Naive thymus-derived CD4-positive, alpha-beta T cell (primary cell): ENCODE measurements at regions of chr4 and their contacts with region 1.

Region 1: DNA sequence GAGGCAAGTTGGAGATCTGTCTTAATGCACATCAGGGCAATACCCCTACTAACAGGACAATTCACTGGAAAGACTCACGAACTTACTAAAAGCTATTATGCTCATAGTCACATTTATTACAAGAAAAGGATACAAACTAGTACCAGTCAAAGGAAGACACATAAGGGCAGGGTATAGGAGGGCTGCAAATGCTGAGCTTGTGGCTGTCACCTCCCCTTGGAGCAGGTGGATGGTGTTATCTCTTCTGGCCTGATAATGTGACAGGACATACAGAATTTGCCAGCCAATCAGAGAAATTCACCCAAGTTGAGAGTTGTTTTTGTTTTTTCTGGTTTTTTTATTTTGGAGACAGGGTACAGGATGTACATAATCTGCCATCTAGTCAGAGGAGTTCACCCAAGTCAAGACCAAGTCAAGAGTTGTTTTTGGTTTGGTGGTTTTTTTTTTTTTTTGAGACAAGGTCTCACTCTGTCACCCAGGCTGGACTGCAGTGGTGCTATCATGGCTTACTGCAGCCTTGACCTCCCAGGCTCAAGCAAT is 8.8 kb downstream of the HERC5 start:
- DNase-seq: no peak
- ATAC-seq: no peak
- H3K4me3 ChIP-seq: no peak overlapping the region
- H3K4me3 Mint-ChIP-seq: peak overlapping the region in 1 of 10 donors; percentile 10
- H3K27ac ChIP-seq: no peak overlapping the region
- H3K27ac Mint-ChIP-seq: peak overlapping the region in 2 of 9 donors; percentile 0 to 79
- H3K4me1 ChIP-seq: no peaks in the 10 kb centered on the region
- H3K4me1 Mint-ChIP-seq: peaks cover 0 to 43% (median 13%) of the 10 kb centered on the region in 7 donors
- H3K27me3 ChIP-seq: no peaks in the 10 kb centered on the region
- H3K27me3 Mint-ChIP-seq: no peaks in the 10 kb centered on the region

Region 2: DNA sequence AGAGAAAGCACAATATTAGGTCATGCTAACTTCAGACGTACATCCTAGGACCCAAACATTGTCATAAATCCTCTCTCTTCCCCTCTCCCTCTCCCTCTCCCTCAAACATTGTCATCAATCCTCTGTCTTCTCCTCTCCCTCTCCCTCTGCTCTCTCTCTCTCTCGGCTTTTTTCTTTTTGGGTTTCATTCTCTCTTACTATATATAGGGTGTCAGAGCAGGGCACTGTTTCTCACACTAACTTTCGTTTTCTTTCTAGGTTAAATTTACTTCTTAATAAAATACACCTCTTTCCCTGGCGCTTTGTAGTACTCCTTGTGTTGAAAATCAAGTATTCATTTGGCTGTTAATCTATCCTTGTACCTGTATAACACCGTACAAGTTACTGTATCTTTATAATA is 45.8 kb before region 1 on chr4:
- CTCF ChIA-PET with region 1: interaction called, 3 read pairs
- POLR2A ChIA-PET with region 1: interaction called, 3 read pairs
- intact Hi-C with region 1: loop called in 1 of 2 experiments (anchors 1 kb)
- DNase-seq: no peak
- ATAC-seq: no peak
- H3K4me3 ChIP-seq: no peak overlapping the region
- H3K4me3 Mint-ChIP-seq: peak overlapping the region in 1 of 10 donors; percentile 13
- H3K27ac ChIP-seq: no peak overlapping the region
- H3K27ac Mint-ChIP-seq: peak overlapping the region in 2 of 9 donors; percentile 3 to 4
- H3K4me1 ChIP-seq: no peaks in the 10 kb centered on the region
- H3K4me1 Mint-ChIP-seq: peaks cover 0 to 5% (median 0%) of the 10 kb centered on the region in 7 donors
- H3K27me3 ChIP-seq: no peaks in the 10 kb centered on the region
- H3K27me3 Mint-ChIP-seq: no peaks in the 10 kb centered on the region

Region 3: GRCh38 chr4:88503344-88503743 is 37.6 kb after region 1 on chr4:
- CTCF ChIA-PET with region 1: no interaction called
- POLR2A ChIA-PET with region 1: no interaction called
- intact Hi-C with region 1: loop called in 1 of 2 experiments (anchors 5 kb)
- DNase-seq: no peak
- ATAC-seq: no peak
- H3K4me3 ChIP-seq: no peak overlapping the region
- H3K4me3 Mint-ChIP-seq: no peak overlapping the region
- H3K27ac ChIP-seq: no peak overlapping the region
- H3K27ac Mint-ChIP-seq: no peak overlapping the region
- H3K4me1 ChIP-seq: no peaks in the 10 kb centered on the region
- H3K4me1 Mint-ChIP-seq: peaks cover 0 to 12% (median 0%) of the 10 kb centered on the region in 7 donors
- H3K27me3 ChIP-seq: no peaks in the 10 kb centered on the region
- H3K27me3 Mint-ChIP-seq: no peaks in the 10 kb centered on the region